ENCODE measurements at regions of chr1 and their contacts with region 1.

Region 1: GRCh38 chr1:2921970-2922686 is 99.1 kb upstream of the ACTRT2 start:
- ATAC-seq: peak in 1 of 8 experiments; percentile 20
- H3K4me3 ChIP-seq: no peak overlapping the region
- H3K27ac ChIP-seq: no peak overlapping the region
- H3K4me1 ChIP-seq: no peaks in the 10 kb centered on the region

Region 2: DNA sequence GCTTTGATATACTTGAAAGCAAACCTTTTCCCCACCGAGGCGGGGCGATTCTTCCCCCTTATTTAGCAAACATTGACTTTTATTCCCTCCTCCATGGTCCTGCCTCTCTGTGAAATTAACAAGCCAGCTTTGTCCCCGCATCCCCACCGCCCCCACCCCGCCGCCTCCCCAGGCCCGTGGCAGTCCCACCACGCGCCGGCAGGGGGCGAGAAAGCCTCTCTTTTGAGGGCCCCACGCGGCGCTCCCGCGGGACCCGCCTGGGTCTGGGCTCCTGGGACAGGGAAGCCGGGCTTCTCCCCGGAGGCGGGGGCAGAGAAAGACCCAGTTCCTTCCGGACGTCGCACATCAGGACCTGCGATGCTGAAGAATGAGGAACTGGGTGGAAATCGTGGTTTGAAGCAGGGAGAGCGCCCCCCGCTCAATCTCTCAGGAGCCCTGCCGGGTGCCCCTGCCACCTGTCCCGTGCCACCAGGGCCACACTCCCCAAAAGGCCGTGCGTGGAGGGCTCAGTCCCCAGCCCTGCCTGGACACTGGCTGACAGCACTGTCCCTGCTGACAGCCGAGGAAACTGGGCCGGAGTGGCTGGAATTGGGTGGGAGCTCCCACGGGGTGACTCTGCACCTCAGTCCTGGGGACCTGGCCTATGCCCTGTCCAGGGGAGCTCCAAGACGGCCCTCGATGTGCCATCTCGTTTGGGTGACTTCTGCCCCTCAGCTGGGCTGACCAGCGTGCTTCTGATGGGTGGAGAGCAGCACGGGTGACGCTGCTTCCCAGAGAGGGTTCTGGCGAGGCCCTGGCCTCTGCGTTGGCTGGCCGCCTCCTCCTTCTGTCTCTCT is 90.5 kb after region 1 on chr1:
- in situ Hi-C with region 1: loop called in 1 of 9 experiments (anchors 25 kb)
- ATAC-seq: peak in 5 of 8 experiments; percentile 21 to 67 (median 60)
- H3K4me3 ChIP-seq: no peak overlapping the region
- H3K27ac ChIP-seq: peak overlapping the region in 1 of 2 donors; percentile 61
- H3K4me1 ChIP-seq: peaks cover 0 to 6% of the 10 kb centered on the region in 2 donors